ENCODE measurements at regions of chr5 and their contacts with region 1.

Region 1: GRCh38 chr5:54867310-54867944 is 118.0 kb downstream of the ESM1 start:
- DNase-seq: peak in 4 of 5 donors; percentile 58 to 66 (median 62)
- H3K4me3 ChIP-seq: no peak overlapping the region
- H3K4me3 Mint-ChIP-seq: peak overlapping the region in 7 of 8 donors; percentile 15 to 75 (median 39)
- H3K27ac ChIP-seq: no peak overlapping the region
- H3K27ac Mint-ChIP-seq: peak overlapping the region in 2 of 7 donors; percentile 3 to 11
- H3K4me1 ChIP-seq: peaks cover 4% of the 10 kb centered on the region
- H3K4me1 Mint-ChIP-seq: peaks cover 0 to 5% (median 4%) of the 10 kb centered on the region in 4 donors
- H3K27me3 ChIP-seq: peaks cover 3% of the 10 kb centered on the region
- H3K27me3 Mint-ChIP-seq: peaks cover 26% of the 10 kb centered on the region in 2 donors

Region 2: DNA sequence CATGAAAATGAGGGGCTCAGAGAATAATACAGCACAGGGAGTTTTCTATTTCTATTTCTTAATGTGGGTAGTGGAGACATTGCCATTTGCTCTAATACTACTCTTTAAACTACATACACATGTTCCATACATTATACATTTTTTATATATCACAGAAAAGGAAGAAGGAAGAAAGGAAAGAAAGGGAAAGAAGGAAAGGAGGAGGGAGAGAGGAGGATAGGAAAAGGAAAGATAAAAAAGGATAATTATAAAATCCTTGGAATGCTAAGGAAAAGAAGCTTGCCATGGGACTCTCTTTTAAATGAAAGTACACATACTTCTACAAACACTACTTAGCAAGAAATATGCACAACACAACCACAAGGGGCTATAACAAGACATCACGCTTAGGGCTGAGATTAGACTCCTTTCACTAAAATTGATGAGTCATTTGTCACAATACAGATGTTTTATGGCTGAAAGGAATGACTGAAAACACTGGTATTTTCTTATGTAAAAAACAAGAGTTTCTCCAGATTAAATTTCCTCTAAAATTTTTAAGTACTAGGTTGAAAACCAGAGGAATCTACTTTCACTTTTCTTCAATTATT is 776.8 kb before region 1 on chr5:
- CTCF ChIA-PET with region 1: no interaction called
- POLR2A ChIA-PET with region 1: no interaction called
- intact Hi-C with region 1: no loop called
- DNase-seq: no peak
- H3K4me3 ChIP-seq: no peak overlapping the region
- H3K4me3 Mint-ChIP-seq: no peak overlapping the region
- H3K27ac ChIP-seq: no peak overlapping the region
- H3K27ac Mint-ChIP-seq: no peak overlapping the region
- H3K4me1 ChIP-seq: no peaks in the 10 kb centered on the region
- H3K4me1 Mint-ChIP-seq: peaks cover 0 to 4% (median 2%) of the 10 kb centered on the region in 4 donors
- H3K27me3 ChIP-seq: no peaks in the 10 kb centered on the region
- H3K27me3 Mint-ChIP-seq: no peaks in the 10 kb centered on the region

Region 3: GRCh38 chr5:54443270-54443669 is 424.2 kb before region 1 on chr5:
- CTCF ChIA-PET with region 1: interaction called, 11 read pairs
- POLR2A ChIA-PET with region 1: no interaction called
- intact Hi-C with region 1: loop called (anchors 1 kb)
- DNase-seq: peak in 1 of 5 donors; percentile 0
- H3K4me3 ChIP-seq: no peak overlapping the region
- H3K4me3 Mint-ChIP-seq: no peak overlapping the region
- H3K27ac ChIP-seq: no peak overlapping the region
- H3K27ac Mint-ChIP-seq: no peak overlapping the region
- H3K4me1 ChIP-seq: peaks cover 7% of the 10 kb centered on the region
- H3K4me1 Mint-ChIP-seq: peaks cover 7 to 13% (median 9%) of the 10 kb centered on the region in 4 donors
- H3K27me3 ChIP-seq: no peaks in the 10 kb centered on the region
- H3K27me3 Mint-ChIP-seq: peaks cover 3 to 5% of the 10 kb centered on the region in 2 donors

Region 4: DNA sequence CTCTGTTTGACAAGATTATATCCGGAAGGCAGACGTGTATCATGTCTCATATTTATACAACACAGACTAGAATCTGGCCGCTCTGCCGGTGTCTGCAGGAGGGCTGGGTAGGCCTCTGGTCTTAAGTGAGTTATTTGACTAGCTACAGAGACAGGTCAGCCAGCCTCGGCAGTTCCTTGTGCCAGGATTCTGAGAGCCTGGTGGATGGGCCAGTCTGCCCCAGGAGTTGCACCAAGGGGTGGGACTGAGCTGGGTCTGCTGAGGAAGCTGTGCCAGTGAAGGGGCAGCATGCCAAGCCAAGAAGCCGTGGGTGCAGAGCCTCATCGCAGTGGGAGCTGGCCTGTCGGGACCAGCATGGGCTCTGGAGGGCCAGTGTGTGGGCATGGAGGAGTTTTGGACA is 342.7 kb before region 1 on chr5:
- CTCF ChIA-PET with region 1: interaction called, 10 read pairs
- POLR2A ChIA-PET with region 1: no interaction called
- intact Hi-C with region 1: no loop called
- DNase-seq: no peak
- H3K4me3 ChIP-seq: no peak overlapping the region
- H3K4me3 Mint-ChIP-seq: peak overlapping the region in 3 of 8 donors; percentile 44 to 55 (median 45)
- H3K27ac ChIP-seq: no peak overlapping the region
- H3K27ac Mint-ChIP-seq: peak overlapping the region in 1 of 7 donors; percentile 37
- H3K4me1 ChIP-seq: peaks cover 88% of the 10 kb centered on the region
- H3K4me1 Mint-ChIP-seq: peaks cover 0 to 52% (median 24%) of the 10 kb centered on the region in 4 donors
- H3K27me3 ChIP-seq: no peaks in the 10 kb centered on the region
- H3K27me3 Mint-ChIP-seq: no peaks in the 10 kb centered on the region

Region 5: DNA sequence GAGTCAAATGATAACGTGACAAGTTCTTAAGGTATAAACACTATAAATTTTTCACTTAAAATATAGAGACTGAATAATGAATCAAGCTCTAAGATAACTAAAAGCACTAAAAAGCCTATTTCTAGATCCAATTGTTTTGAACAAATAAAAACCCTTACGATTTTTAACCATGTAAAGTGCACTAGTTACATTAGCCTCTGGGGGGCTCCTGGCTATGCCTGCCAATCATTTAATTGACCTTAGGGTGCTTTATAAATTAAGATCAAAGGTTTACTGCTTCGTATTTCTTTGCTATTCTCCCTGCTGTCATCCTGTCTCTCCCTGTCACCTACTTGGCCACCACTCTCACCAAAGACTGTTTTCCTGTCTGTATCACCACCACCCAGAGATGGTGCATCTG is 15.4 kb before region 1 on chr5:
- CTCF ChIA-PET with region 1: interaction called, 39 read pairs
- POLR2A ChIA-PET with region 1: no interaction called
- intact Hi-C with region 1: no loop called
- DNase-seq: no peak
- H3K4me3 ChIP-seq: no peak overlapping the region
- H3K4me3 Mint-ChIP-seq: no peak overlapping the region
- H3K27ac ChIP-seq: no peak overlapping the region
- H3K27ac Mint-ChIP-seq: no peak overlapping the region
- H3K4me1 ChIP-seq: no peaks in the 10 kb centered on the region
- H3K4me1 Mint-ChIP-seq: no peaks in the 10 kb centered on the region
- H3K27me3 ChIP-seq: no peaks in the 10 kb centered on the region
- H3K27me3 Mint-ChIP-seq: peaks cover 10 to 28% of the 10 kb centered on the region in 2 donors

Region 6: DNA sequence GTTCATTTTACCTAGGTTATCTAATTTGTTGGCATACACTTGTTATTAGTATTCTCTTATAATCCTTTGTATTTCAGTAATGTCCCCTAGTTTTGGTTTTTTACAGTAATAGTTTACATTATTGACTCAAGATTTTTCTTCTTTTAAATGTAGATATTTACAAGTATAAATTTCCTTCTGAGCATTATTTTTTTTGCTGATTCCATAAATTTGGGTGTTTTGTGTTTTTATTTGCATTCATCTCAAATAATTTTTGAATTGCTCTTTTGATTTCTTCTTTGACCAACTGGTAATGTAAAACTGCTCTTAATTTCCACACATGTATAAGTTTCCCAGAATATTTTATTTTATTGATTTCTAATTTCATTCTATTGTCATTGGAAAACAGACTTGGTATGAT is 49.9 kb after region 1 on chr5:
- CTCF ChIA-PET with region 1: no interaction called
- POLR2A ChIA-PET with region 1: no interaction called
- intact Hi-C with region 1: no loop called
- DNase-seq: no peak
- H3K4me3 ChIP-seq: no peak overlapping the region
- H3K4me3 Mint-ChIP-seq: no peak overlapping the region
- H3K27ac ChIP-seq: no peak overlapping the region
- H3K27ac Mint-ChIP-seq: no peak overlapping the region
- H3K4me1 ChIP-seq: no peaks in the 10 kb centered on the region
- H3K4me1 Mint-ChIP-seq: no peaks in the 10 kb centered on the region
- H3K27me3 ChIP-seq: no peaks in the 10 kb centered on the region
- H3K27me3 Mint-ChIP-seq: peaks cover 22 to 24% of the 10 kb centered on the region in 2 donors

Region 7: DNA sequence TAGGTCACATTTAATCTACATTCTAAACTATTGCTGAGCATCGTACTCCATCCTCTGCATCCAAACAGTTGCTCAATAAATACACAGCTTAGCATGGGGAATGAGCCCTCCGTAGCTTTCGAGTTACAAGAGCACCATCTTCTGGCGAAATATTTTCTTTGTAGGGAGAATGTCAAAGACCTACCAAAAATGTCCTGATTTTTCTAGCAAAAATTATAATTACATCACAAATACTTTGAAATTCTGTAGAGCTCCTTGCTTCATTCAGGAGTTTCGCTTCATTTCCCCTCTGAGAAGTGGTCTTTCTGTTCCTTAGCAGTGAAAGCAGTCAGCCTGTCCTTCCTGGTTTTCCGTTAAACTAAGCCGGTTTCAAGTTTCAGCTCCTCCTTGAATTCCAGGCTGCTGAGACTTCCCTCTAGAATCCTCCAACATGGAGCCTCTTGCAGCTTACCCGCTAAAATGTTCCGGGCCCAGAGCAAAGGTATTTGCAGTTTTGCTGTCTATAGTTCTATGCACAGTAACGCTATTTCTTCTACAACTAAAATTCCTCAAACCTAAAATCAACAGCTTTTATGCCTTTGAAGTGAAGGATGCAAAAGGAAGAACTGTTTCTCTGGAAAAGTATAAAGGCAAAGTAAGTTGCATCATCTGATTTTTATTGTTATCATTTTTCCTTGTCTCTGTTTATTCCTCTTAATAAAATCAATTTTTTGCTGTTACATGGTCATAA is 292.5 kb after region 1 on chr5 and contains the start of gene GPX8:
- CTCF ChIA-PET with region 1: interaction called, 16 read pairs
- POLR2A ChIA-PET with region 1: no interaction called
- intact Hi-C with region 1: no loop called
- DNase-seq: peak; percentile 45 to 56 (median 51)
- H3K4me3 ChIP-seq: no peak within 1 kb of the TSS
- H3K4me3 Mint-ChIP-seq: no peak within 1 kb of the TSS
- H3K27ac ChIP-seq: no peak within 1 kb of the TSS
- H3K27ac Mint-ChIP-seq: no peak within 1 kb of the TSS
- H3K4me1 ChIP-seq: no peaks in the 10 kb centered on the region
- H3K4me1 Mint-ChIP-seq: no peaks in the 10 kb centered on the region
- H3K27me3 ChIP-seq: no peaks in the 10 kb centered on the region
- H3K27me3 Mint-ChIP-seq: peaks cover 14 to 24% of the 10 kb centered on the region in 2 donors
- total RNA-seq, gene GPX8: not detected

Region 8: GRCh38 chr5:55742778-55743177 is 875.4 kb after region 1 on chr5:
- CTCF ChIA-PET with region 1: no interaction called
- POLR2A ChIA-PET with region 1: no interaction called
- intact Hi-C with region 1: no loop called
- DNase-seq: no peak
- H3K4me3 ChIP-seq: no peak overlapping the region
- H3K4me3 Mint-ChIP-seq: no peak overlapping the region
- H3K27ac ChIP-seq: no peak overlapping the region
- H3K27ac Mint-ChIP-seq: no peak overlapping the region
- H3K4me1 ChIP-seq: no peaks in the 10 kb centered on the region
- H3K4me1 Mint-ChIP-seq: no peaks in the 10 kb centered on the region
- H3K27me3 ChIP-seq: no peaks in the 10 kb centered on the region
- H3K27me3 Mint-ChIP-seq: peaks cover 2 to 3% of the 10 kb centered on the region in 2 donors